Naive thymus-derived CD4-positive, alpha-beta T cell (primary cell): ENCODE measurements at regions of chr10 and their contacts with region 1.

Region 1: GRCh38 chr10:45235798-45236231 is 79.6 kb downstream of the OR13A1 start:
- DNase-seq: no peak
- ATAC-seq: no peak
- H3K4me3 ChIP-seq: no peak overlapping the region
- H3K4me3 Mint-ChIP-seq: no peak overlapping the region
- H3K27ac ChIP-seq: no peak overlapping the region
- H3K27ac Mint-ChIP-seq: no peak overlapping the region
- H3K4me1 ChIP-seq: no peaks in the 10 kb centered on the region
- H3K4me1 Mint-ChIP-seq: peaks cover 0 to 17% (median 4%) of the 10 kb centered on the region in 7 donors
- H3K27me3 ChIP-seq: no peaks in the 10 kb centered on the region
- H3K27me3 Mint-ChIP-seq: peaks cover 5 to 10% (median 6%) of the 10 kb centered on the region in 5 donors

Region 2: DNA sequence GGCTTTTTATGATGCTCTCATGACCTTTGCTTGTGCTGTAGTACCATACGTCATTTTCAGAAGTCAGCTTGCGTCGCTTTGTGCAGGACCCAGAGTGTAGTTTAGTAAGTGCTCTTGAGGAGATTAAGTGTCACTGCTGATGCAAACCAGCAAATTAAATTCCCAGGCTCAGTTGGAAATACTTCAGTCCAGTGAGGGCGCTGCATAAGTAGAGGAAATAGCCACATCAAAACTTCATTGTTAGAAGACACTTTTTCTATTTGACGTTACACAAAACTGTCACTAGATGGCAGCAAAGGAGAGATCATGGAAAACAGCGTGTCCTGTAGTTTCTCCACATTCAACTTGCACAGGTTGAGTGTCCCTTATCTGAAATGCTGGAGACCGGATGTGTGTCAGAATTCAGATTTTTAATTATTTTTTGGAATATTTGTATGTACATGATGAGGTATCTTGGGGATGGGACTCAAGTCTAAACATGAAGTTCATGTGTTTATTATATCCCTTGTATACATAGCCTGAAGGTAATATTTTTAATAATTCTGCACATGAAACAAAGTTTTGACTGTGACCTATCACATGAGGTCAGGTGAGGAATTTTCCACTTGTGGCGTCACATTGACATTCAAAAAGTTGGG is 227.2 kb before region 1 on chr10:
- CTCF ChIA-PET with region 1: no interaction called
- POLR2A ChIA-PET with region 1: no interaction called
- intact Hi-C with region 1: loop called (anchors 2 to 5 kb)
- DNase-seq: peak in 7 of 9 donors; percentile 33 to 68 (median 56)
- ATAC-seq: peak; percentile 91
- H3K4me3 ChIP-seq: no peak overlapping the region
- H3K4me3 Mint-ChIP-seq: no peak overlapping the region
- H3K27ac ChIP-seq: no peak overlapping the region
- H3K27ac Mint-ChIP-seq: no peak overlapping the region
- H3K4me1 ChIP-seq: no peaks in the 10 kb centered on the region
- H3K4me1 Mint-ChIP-seq: peaks cover 0 to 7% (median 3%) of the 10 kb centered on the region in 7 donors
- H3K27me3 ChIP-seq: no peaks in the 10 kb centered on the region
- H3K27me3 Mint-ChIP-seq: peaks cover 0 to 8% (median 0%) of the 10 kb centered on the region in 5 donors

Region 3: GRCh38 chr10:46255801-46256747 is 1020.3 kb after region 1 on chr10:
- CTCF ChIA-PET with region 1: no interaction called
- POLR2A ChIA-PET with region 1: no interaction called
- intact Hi-C with region 1: loop called in 1 of 2 experiments (anchors 10 kb)
- DNase-seq: peak in 3 of 9 donors; percentile 16 to 60 (median 29)
- ATAC-seq: peak; percentile 74
- H3K4me3 ChIP-seq: no peak overlapping the region
- H3K4me3 Mint-ChIP-seq: peak overlapping the region in 1 of 10 donors; percentile 0
- H3K27ac ChIP-seq: no peak overlapping the region
- H3K27ac Mint-ChIP-seq: peak overlapping the region in 8 of 9 donors; percentile 26 to 81 (median 61)
- H3K4me1 ChIP-seq: peaks cover 0 to 2% of the 10 kb centered on the region in 2 donors
- H3K4me1 Mint-ChIP-seq: peaks cover 12 to 57% (median 48%) of the 10 kb centered on the region in 7 donors
- H3K27me3 ChIP-seq: no peaks in the 10 kb centered on the region
- H3K27me3 Mint-ChIP-seq: no peaks in the 10 kb centered on the region